ENCODE measurements at regions of chr4 and their contacts with region 1.

Region 1: DNA sequence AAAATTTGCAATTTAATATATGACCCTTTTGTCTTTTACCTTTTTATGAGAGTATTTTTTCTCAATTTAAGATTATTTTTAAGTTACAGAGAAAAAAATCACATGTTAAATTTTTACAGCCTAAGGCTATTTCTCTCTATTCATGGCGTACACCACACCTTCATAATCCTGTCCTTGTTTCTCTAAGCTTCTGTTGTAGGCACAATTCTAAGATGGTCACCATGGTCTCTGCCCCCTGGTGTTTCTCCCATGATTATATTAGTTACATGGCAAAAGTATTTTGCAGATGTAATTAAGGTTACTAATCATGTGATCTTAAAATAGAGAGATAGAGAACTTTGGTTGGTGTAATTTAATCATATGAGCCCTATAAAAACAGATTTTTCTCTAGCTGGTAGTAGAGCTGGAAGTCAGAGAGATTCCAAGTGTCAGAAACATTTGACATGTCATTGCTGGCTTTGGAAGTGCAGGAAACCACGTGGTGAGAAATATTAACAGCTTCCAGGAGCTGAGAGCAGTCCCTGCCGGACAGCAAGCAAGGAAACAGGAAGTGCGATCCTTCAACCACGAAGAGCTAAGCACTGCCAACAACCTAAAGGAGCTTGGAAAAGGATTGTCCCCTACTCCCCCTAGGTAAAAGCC is 89.8 kb downstream of the EIF4E start:
- DNase-seq: no peak
- H3K4me3 ChIP-seq: no peak overlapping the region
- H3K27ac ChIP-seq: no peak overlapping the region
- H3K4me1 ChIP-seq: no peaks in the 10 kb centered on the region
- CTCF ChIP-seq: no peak

Region 2: DNA sequence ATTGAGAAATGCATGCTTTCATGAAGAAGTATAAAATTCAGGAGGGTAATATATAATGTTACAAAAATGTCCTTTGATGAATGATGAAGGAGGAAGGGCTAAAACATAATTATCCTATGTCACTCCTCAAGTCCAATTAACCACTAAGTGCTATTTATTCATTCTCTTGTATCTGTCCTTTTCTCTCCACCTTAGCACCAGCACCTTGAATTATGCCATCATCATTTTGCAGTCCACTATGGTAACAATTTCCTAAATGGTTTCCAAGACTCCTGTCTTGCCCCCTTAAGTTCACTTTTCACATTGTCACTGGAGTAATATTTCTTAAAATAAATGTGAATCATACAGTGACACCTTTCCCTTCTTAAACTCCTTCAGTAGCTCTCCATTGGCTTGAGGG is 1452.1 kb before region 1 on chr4:
- CTCF ChIA-PET with region 1: no interaction called
- POLR2A ChIA-PET with region 1: no interaction called
- intact Hi-C with region 1: no loop called
- DNase-seq: no peak
- H3K4me3 ChIP-seq: no peak overlapping the region
- H3K27ac ChIP-seq: no peak overlapping the region
- H3K4me1 ChIP-seq: no peaks in the 10 kb centered on the region
- CTCF ChIP-seq: no peak

Region 3: GRCh38 chr4:98745366-98745765 is 93.7 kb before region 1 on chr4:
- CTCF ChIA-PET with region 1: no interaction called
- POLR2A ChIA-PET with region 1: interaction called, 11 read pairs
- intact Hi-C with region 1: no loop called
- DNase-seq: peak; percentile 10
- H3K4me3 ChIP-seq: no peak overlapping the region
- H3K27ac ChIP-seq: no peak overlapping the region
- H3K4me1 ChIP-seq: no peaks in the 10 kb centered on the region
- CTCF ChIP-seq: peak; percentile 56

Measured in OCI-LY7 (cell line).